ENCODE measurements at regions of chr1 and their contacts with region 1.

Region 1: DNA sequence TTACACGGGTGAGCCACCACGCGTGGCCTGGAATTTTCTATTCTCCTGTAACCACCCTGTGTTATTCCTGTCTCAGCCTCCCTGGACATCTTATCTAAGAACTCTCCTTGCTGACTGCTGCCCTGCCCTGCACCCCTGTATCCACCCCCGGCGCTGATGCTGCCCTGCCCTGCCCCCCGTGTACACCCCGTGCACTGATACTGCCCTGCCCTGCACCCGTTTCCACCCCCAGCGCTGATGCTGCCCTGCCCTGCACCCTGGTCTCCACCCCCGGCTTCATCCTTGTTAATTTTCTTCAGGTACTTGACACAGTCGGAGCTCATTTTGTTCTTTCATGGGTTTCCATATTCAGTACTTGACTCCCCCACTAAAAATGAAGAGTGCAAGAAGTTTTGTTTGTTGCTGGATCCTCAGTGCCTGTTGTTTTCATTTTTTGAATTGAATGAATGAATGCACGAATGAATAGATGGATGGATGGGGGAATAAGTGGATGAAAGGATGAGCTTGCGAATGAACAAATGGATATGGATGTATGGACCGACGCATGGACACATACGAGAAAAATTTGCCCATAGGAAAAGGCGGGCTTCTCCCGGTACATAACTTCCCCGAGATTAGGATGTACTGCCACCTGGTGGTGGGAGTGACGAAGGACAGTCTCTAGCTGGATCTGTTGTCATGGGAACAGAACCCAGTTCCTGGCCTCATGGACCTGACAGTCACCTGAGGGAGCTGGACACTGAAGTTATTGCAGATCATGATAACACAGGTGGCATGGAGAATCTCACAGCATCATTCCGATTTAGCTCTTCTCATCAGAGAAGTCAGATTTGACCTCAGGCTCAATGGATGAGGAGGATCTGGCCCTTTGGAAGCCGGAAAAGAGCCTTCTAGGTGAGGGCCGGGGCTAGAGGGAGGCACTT is 14.9 kb downstream of the AADACL4 start:
- DNase-seq: peak; percentile 68
- ATAC-seq: peak; percentile 85 to 90

Region 2: DNA sequence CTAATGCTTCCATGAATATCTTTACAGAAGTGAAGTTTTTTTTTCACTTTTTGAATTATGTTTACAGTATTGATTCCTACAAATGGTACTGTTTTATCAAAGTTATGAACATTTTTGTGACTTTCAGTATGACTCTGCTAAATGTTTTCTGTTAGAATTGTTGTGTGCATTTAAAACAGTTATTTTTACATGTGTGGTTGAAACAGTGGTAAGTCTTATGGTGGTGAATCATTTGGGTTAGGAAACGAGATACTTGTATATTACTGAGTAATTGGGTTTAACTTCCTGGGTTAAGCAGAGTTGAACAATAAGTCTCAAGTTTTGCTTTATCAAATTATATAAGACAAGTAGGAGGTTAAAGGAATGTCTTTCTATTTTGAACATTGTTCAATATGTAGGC is 362.2 kb before region 1 on chr1:
- intact Hi-C with region 1: no loop called
- DNase-seq: no peak
- ATAC-seq: no peak

Region 3: GRCh38 chr1:12314333-12314903 is 344.4 kb before region 1 on chr1:
- intact Hi-C with region 1: loop called in 1 of 2 experiments (anchors 5 kb)
- DNase-seq: no peak
- ATAC-seq: peak; percentile 42 to 51

Measured in left cardiac atrium (tissue), 4 donors.